Caco-2 (cell line): ENCODE measurements at regions of chr1 and their contacts with region 1.

Region 1: DNA sequence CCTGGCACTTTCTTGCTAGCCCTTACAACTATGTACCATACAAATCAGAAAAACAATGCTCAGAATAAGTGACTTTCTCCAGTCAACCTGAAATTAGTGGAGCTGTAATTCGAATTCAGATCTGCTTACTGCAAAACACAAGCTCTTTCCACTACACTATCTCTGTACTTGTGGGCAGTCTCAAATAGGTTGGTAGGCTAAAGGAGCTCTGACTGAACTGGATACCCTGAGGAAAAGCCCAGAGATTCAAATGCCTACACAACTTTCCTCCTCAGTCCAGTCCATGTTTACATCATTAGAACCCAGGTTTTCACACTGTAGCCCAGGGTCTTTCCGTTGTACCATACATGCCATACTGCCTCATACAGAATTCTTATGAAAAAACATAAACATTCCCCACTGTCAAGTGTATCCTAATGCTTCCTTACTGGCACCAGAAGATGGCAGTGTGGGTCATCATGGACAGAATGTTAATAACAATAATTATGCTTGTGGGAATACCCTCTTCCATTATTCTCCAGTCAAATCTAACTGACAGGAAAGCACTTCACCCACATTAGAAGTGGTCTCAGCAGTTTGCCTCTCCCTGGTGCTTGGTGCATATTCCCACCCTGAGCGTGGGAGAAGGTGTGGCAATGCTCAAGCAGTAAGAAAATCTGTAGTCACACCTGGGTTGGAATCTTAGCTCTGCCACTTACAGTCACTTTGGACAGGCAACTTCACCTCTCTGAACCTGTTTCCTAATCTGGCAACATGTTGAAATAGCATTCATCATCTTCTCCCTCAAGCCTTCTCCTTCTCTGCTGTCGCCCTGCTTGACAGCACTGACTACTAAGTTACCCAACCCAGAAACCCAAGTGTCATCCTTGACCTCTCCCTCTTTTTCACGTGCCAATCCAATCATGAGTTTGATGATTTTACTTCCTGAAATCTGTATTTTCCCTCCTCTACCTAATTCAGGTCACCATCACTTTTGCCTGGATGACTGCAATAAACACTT is 14.4 kb upstream of the ZFYVE9 start:
- DNase-seq: peak; percentile 37 to 48
- H3K4me3 ChIP-seq: no peak overlapping the region
- H3K4me3 Mint-ChIP-seq: no peak overlapping the region
- H3K27ac Mint-ChIP-seq: no peak overlapping the region
- H3K4me1 ChIP-seq: no peaks in the 10 kb centered on the region
- H3K4me1 Mint-ChIP-seq: no peaks in the 10 kb centered on the region
- H3K27me3 ChIP-seq: no peaks in the 10 kb centered on the region
- H3K27me3 Mint-ChIP-seq: peaks cover 3% of the 10 kb centered on the region
- CTCF ChIP-seq: peak; percentile 38 to 66

Region 2: DNA sequence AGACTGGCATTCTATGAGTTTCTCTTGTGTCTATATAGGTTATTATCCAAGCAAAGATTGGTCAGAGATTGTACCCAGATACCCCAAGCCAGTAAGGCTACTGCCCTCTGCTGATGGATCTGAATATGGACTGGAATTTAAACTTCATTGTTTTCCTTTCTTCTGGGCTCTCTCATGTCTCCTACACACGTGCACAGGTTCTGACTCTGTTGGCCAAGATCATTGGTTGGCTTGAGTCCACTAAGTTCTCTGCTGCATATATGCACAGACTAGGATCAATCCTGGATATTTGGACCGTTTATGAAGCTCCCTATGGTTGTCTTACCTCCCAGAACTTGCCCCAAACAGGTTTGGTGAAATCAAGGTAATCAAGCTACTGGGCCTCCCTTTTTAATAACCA is 168.9 kb after region 1 on chr1:
- CTCF ChIA-PET with region 1: interaction called, 5 read pairs
- POLR2A ChIA-PET with region 1: no interaction called
- intact Hi-C with region 1: loop called (anchors 1 kb)
- DNase-seq: peak in 1 of 2 experiments; percentile 60
- H3K4me3 ChIP-seq: no peak overlapping the region
- H3K4me3 Mint-ChIP-seq: no peak overlapping the region
- H3K27ac Mint-ChIP-seq: no peak overlapping the region
- H3K4me1 ChIP-seq: no peaks in the 10 kb centered on the region
- H3K4me1 Mint-ChIP-seq: no peaks in the 10 kb centered on the region
- H3K27me3 ChIP-seq: no peaks in the 10 kb centered on the region
- H3K27me3 Mint-ChIP-seq: no peaks in the 10 kb centered on the region
- CTCF ChIP-seq: peak; percentile 68 to 74

Region 3: GRCh38 chr1:52348704-52349300 is 221.3 kb after region 1 on chr1:
- CTCF ChIA-PET with region 1: interaction called, 6 read pairs
- POLR2A ChIA-PET with region 1: no interaction called
- intact Hi-C with region 1: loop called (anchors 1 kb)
- DNase-seq: peak; percentile 56
- H3K4me3 ChIP-seq: no peak overlapping the region
- H3K4me3 Mint-ChIP-seq: no peak overlapping the region
- H3K27ac Mint-ChIP-seq: no peak overlapping the region
- H3K4me1 ChIP-seq: no peaks in the 10 kb centered on the region
- H3K4me1 Mint-ChIP-seq: no peaks in the 10 kb centered on the region
- H3K27me3 ChIP-seq: no peaks in the 10 kb centered on the region
- H3K27me3 Mint-ChIP-seq: no peaks in the 10 kb centered on the region
- CTCF ChIP-seq: peak in 1 of 2 experiments; percentile 42

Region 4: DNA sequence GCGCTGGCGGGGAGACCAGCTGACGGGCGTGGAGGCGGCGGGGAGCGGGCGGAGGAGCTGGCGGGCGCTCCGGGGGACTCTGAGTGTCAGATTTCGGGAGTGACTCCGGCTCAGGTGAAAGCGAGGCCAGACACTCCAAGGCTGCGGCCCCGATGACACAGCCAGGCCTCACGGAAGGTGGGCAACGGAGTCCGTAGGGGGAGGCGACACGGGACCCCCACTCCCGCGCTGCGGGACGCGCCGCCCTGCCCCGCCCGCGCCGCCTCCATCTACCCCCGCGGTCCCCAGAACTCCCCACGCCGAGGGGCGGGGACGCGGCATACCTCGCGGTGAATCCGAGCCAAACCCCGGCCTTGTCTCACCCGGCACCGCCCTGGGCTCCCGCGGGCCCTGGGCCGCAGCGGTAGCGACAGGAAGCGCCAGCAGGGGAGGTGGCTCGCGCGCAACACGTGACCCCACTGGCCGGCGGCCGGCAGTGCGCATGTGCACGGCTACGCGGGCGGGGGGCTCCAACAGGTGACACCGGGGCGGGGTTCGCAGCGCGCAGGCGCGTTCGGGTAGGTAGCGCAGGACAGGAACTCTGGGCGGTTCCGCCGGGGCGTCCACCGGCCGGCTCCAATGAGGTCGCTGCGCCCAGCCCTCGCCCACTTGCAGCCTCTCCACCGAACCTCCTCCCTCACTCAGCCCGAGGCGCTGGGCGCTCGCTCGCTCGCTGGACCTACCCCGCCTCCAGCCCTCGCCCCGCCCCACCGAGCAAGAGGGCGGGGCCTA is 238.4 kb after region 1 on chr1 and contains the start of gene CC2D1B:
- CTCF ChIA-PET with region 1: no interaction called
- POLR2A ChIA-PET with region 1: no interaction called
- intact Hi-C with region 1: loop called (anchors 1 kb)
- DNase-seq: peak; percentile 99
- H3K4me3 ChIP-seq: peak within 1 kb of the TSS; percentile 83
- H3K4me3 Mint-ChIP-seq: peak within 1 kb of the TSS; percentile 96
- H3K27ac Mint-ChIP-seq: peak within 1 kb of the TSS; percentile 95
- H3K4me1 ChIP-seq: peaks cover 6% of the 10 kb centered on the region; the same call in 1 of the 2 replicates
- H3K4me1 Mint-ChIP-seq: peaks cover 9% of the 10 kb centered on the region
- H3K27me3 ChIP-seq: no peaks in the 10 kb centered on the region
- H3K27me3 Mint-ChIP-seq: no peaks in the 10 kb centered on the region
- CTCF ChIP-seq: peak in 1 of 2 experiments; percentile 15
- total RNA-seq, gene CC2D1B: 31.1 and 32.4 TPM in 2 replicates